Endothelial cell of umbilical vein (primary cell): ENCODE measurements at regions of chr13 and their contacts with region 1.

Region 1: DNA sequence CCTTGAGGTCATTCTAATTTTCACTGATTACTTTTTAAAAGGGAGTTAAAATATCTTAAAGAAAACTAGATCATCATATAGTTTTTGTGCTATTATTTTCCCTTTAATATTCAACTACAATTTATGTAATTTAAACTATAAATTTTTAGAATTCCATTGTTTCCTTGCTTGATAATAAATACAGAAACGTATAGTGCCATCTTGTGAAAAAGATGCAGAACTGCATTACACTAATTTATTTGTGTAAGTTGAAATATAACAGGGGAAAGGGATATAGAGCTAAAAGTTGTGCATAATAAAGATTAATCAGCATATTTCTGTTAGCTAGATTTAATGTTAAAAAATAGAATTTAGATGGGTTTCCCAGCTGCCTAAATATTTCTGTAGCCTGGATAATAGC is 61.5 kb upstream of the TDRD3 start:
- DNase-seq: peak; percentile 37
- H3K4me3 ChIP-seq: no peak overlapping the region
- H3K27ac ChIP-seq: no peak overlapping the region
- H3K4me1 ChIP-seq: peaks cover 7% of the 10 kb centered on the region
- H3K27me3 ChIP-seq: peaks cover 9 to 17% of the 10 kb centered on the region in 2 experiments
- CTCF ChIP-seq: peak in 1 of 2 donors; percentile 27
- POLR2A ChIP-seq: no peak

Region 2: DNA sequence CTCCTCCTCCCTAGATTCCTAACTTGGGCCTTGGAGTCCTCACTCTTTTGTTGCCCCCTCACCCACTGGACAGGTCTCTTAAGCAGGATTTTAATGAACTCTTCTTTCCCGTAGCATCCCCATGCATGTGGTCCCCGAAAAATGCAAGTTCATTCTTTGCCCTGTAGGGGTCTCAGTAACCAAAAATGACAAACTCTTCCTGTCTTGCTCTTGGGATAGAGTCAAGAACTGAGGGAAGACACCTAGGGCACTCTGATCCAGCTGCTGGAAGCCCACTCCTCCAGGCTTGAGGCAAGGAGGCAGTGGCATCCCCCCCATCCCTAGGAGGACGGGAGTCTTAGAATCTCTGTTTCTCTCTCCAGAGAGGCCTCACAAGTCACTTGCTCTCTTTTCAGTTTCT is 1158.8 kb before region 1 on chr13:
- CTCF ChIA-PET with region 1: no interaction called
- POLR2A ChIA-PET with region 1: no interaction called
- dilution Hi-C with region 1: no loop called
- intact Hi-C with region 1: no loop called
- DNase-seq: no peak
- H3K4me3 ChIP-seq: no peak overlapping the region
- H3K27ac ChIP-seq: no peak overlapping the region
- H3K4me1 ChIP-seq: peaks cover 6% of the 10 kb centered on the region
- H3K27me3 ChIP-seq: no peaks in the 10 kb centered on the region
- CTCF ChIP-seq: no peak
- POLR2A ChIP-seq: no peak

Region 3: DNA sequence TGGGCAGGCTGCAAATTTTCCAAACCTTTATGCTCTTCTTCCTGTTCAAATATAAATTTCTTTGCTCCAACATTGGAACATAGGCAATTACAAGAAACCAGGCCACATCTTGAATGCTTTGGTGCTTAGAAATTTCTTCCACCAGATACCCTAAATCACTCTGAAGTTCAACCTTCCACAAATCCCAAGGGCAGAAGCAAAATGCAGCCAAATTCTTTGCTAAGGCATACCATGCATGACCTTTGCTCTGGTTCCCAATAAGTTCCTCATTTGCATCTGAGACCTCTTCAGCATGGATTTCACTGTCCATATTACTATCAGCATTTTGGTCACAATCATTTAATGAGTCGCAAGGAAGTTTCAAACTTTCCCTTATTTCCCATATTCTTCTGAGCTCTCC is 302.7 kb before region 1 on chr13:
- CTCF ChIA-PET with region 1: no interaction called
- POLR2A ChIA-PET with region 1: no interaction called
- dilution Hi-C with region 1: no loop called
- intact Hi-C with region 1: loop called (anchors 10 kb)
- DNase-seq: no peak
- H3K4me3 ChIP-seq: no peak overlapping the region
- H3K27ac ChIP-seq: no peak overlapping the region
- H3K4me1 ChIP-seq: no peaks in the 10 kb centered on the region
- H3K27me3 ChIP-seq: no peaks in the 10 kb centered on the region
- CTCF ChIP-seq: no peak
- POLR2A ChIP-seq: no peak

Region 4: DNA sequence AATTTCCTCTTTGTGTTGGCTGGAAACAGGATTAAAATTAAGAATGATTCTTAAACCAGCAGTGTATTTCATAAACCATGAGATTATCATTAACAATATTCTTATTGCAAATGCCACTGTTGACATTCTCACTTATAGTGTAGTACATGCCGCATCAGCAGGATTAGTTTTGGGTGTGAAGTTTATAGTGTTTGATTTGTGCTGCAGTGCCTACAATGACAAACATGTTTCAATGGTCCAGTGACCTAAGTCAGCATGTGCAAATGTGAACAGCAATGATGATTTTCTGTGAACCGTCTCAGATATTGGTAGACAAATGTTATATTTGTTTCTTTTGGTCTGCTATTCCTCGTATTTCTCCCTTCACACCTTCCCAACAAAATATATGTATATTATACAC is 11.6 kb after region 1 on chr13:
- CTCF ChIA-PET with region 1: interaction called, 12 read pairs
- POLR2A ChIA-PET with region 1: no interaction called
- dilution Hi-C with region 1: no loop called
- intact Hi-C with region 1: no loop called
- DNase-seq: no peak
- H3K4me3 ChIP-seq: no peak overlapping the region
- H3K27ac ChIP-seq: no peak overlapping the region
- H3K4me1 ChIP-seq: no peaks in the 10 kb centered on the region
- H3K27me3 ChIP-seq: peaks cover 12 to 23% of the 10 kb centered on the region in 2 experiments
- CTCF ChIP-seq: no peak
- POLR2A ChIP-seq: no peak

Region 5: GRCh38 chr13:60439201-60439600 is 103.7 kb after region 1 on chr13:
- CTCF ChIA-PET with region 1: no interaction called
- POLR2A ChIA-PET with region 1: no interaction called
- dilution Hi-C with region 1: no loop called
- intact Hi-C with region 1: no loop called
- DNase-seq: no peak
- H3K4me3 ChIP-seq: no peak overlapping the region
- H3K27ac ChIP-seq: no peak overlapping the region
- H3K4me1 ChIP-seq: no peaks in the 10 kb centered on the region
- H3K27me3 ChIP-seq: no peaks in the 10 kb centered on the region
- CTCF ChIP-seq: no peak
- POLR2A ChIP-seq: no peak